ENCODE measurements at regions of chr1 and their contacts with region 1.

Region 1: DNA sequence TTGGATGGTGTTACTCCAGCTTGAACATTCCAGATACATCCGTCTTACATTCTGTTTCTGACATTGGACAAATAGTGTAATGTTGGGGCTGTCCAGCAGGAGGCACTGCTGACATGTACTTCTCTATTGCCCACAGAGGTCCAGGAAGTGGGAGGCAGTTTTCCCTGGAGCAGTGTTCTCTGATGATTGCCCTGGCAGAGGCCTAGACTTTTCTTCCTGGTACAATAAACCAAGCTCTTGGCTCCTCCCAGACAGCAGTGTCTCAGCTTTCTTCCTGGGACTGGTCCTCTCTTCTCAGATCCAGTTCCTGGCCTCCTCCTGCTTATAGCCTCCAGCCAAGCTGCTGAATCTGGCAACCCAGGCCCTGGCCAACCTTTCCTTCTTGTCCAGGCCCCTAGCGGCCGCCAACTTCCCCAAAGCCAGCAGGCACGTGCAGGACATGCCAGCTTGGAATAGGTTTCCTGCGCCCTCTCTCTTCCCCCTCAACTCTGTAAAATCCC is 14.9 kb upstream of the IFNLR1 start:
- DNase-seq: peak; percentile 86 to 87
- ATAC-seq: peak; percentile 93
- H3K4me3 ChIP-seq: no peak overlapping the region
- H3K27ac ChIP-seq: no peak overlapping the region
- H3K4me1 ChIP-seq: no peaks in the 10 kb centered on the region
- H3K27me3 ChIP-seq: no peaks in the 10 kb centered on the region

Region 2: GRCh38 chr1:24391882-24392603 is 190.1 kb after region 1 on chr1:
- intact Hi-C with region 1: loop called (anchors 1 kb)
- DNase-seq: peak in 1 of 2 donors; percentile 71
- ATAC-seq: peak; percentile 86
- H3K4me3 ChIP-seq: no peak overlapping the region
- H3K27ac ChIP-seq: no peak overlapping the region
- H3K4me1 ChIP-seq: no peaks in the 10 kb centered on the region
- H3K27me3 ChIP-seq: no peaks in the 10 kb centered on the region

Region 3: GRCh38 chr1:24586970-24587820 is 385.2 kb after region 1 on chr1:
- intact Hi-C with region 1: loop called in 1 of 2 experiments (anchors 5 kb)
- DNase-seq: no peak
- ATAC-seq: no peak
- H3K4me3 ChIP-seq: no peak overlapping the region
- H3K27ac ChIP-seq: no peak overlapping the region
- H3K4me1 ChIP-seq: no peaks in the 10 kb centered on the region
- H3K27me3 ChIP-seq: no peaks in the 10 kb centered on the region

Region 4: DNA sequence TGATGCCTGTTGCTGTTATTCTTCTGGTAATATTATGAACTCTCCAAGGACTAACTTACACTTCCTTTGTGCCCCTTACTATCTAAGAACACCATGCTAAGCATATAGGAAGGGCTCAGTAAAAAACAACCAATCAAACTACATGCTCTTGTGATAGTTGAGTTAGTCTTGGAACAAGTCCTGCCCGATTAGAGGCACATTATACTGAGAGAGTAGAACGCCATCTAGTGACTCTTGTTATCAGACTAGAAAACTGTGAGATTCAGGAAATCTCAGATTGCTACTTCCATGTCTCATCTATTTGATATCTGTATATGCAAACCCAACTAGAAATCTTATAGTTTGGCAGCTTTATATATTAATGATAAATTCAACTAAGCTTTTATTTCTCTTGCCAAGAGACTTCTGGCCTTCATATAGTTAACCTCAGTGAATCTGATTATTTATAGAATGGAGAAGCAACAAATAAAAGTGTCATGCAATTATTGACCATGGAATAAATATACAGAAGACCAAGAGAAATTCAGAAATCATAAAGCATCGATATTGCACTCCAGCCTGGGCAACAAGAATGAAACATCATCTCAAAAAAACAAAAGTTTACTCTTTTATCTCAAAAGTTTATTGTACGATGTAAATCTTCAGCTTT is 433.3 kb after region 1 on chr1:
- intact Hi-C with region 1: loop called (anchors 10 kb)
- DNase-seq: no peak
- ATAC-seq: no peak
- H3K4me3 ChIP-seq: no peak overlapping the region
- H3K27ac ChIP-seq: no peak overlapping the region
- H3K4me1 ChIP-seq: no peaks in the 10 kb centered on the region
- H3K27me3 ChIP-seq: no peaks in the 10 kb centered on the region

Measured in aorta (tissue), 5 donors.